Sigmoid colon (tissue), 7 donors: ENCODE measurements at regions of chr20 and their contacts with region 1.

Region 1: GRCh38 chr20:47620808-47621805 is 119.4 kb downstream of the NCOA3 start:
- DNase-seq: no peak
- H3K4me3 ChIP-seq: no peak overlapping the region
- H3K27ac ChIP-seq: no peak overlapping the region
- H3K4me1 ChIP-seq: peaks cover 0 to 4% (median 0%) of the 10 kb centered on the region in 4 donors
- H3K27me3 ChIP-seq: no peaks in the 10 kb centered on the region
- CTCF ChIP-seq: peak; percentile 64 to 85 (median 66)
- EP300 ChIP-seq: no peak
- POLR2A ChIP-seq: no peak

Region 2: GRCh38 chr20:46757754-46758678 is 863.1 kb before region 1 on chr20:
- intact Hi-C with region 1: loop called (anchors 10 kb)
- DNase-seq: no peak
- H3K4me3 ChIP-seq: no peak overlapping the region
- H3K27ac ChIP-seq: no peak overlapping the region
- H3K4me1 ChIP-seq: peaks cover 0 to 4% (median 0%) of the 10 kb centered on the region in 4 donors
- H3K27me3 ChIP-seq: no peaks in the 10 kb centered on the region
- CTCF ChIP-seq: peak; percentile 38 to 95 (median 88)
- EP300 ChIP-seq: no peak
- POLR2A ChIP-seq: no peak

Region 3: GRCh38 chr20:47196091-47197081 is 424.7 kb before region 1 on chr20:
- intact Hi-C with region 1: loop called (anchors 1 kb)
- DNase-seq: peak; percentile 78
- H3K4me3 ChIP-seq: no peak overlapping the region
- H3K27ac ChIP-seq: no peak overlapping the region
- H3K4me1 ChIP-seq: peaks cover 0 to 6% (median 2%) of the 10 kb centered on the region in 4 donors
- H3K27me3 ChIP-seq: no peaks in the 10 kb centered on the region
- CTCF ChIP-seq: peak; percentile 72 to 96 (median 88)
- EP300 ChIP-seq: no peak
- POLR2A ChIP-seq: no peak

Region 4: GRCh38 chr20:47389867-47390347 is 231.2 kb before region 1 on chr20:
- intact Hi-C with region 1: loop called (anchors 2 kb)
- DNase-seq: no peak
- H3K4me3 ChIP-seq: no peak overlapping the region
- H3K27ac ChIP-seq: no peak overlapping the region
- H3K4me1 ChIP-seq: peaks cover 0 to under 1% (median under 1%) of the 10 kb centered on the region in 4 donors
- H3K27me3 ChIP-seq: no peaks in the 10 kb centered on the region
- CTCF ChIP-seq: no peak
- EP300 ChIP-seq: no peak
- POLR2A ChIP-seq: no peak

Region 5: DNA sequence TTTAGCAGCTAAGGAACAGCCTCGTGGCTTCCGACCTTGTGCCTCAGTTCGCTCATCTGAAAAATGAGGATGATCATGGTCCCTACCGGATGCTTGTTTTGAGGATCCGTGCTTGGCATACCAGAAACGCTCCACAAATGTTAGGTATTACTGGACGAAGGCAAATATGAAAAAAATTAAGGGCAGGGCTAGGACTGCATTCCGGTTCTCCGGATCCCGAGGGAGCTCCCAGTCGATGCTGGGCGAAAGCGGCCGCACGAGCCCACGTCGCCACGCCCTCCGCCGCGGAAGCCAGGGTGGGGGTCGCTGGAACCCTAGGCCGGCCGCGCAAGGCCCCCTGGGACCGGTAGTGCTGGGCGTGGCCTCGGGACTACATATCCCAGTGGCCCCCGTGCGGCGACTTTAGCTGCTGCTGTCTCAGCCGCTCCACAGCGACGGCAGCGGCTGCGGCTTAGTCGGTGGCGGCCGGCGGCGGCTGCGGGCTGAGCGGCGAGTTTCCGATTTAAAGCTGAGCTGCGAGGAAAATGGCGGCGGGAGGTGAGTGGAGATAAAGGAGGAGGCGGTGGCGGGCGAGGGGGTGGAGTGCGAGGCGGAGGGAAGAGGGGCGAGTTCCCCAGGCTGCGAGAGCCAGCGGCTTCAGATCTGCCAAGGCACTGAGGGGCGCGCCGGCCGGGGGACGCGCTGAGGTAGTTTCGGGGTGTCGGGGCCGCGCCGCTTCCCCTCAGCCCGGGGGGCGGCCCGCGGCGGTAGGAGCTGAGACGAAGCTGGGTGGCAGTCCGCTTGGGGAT is 119.4 kb before region 1 on chr20 and contains the start of gene NCOA3:
- intact Hi-C with region 1: loop called (anchors 5 kb)
- DNase-seq: peak; percentile 95
- H3K4me3 ChIP-seq: peak within 1 kb of the TSS; percentile 69 to 94 (median 91)
- H3K27ac ChIP-seq: peak within 1 kb of the TSS; percentile 91 to 96 (median 94)
- H3K4me1 ChIP-seq: peaks cover 0 to 24% (median 17%) of the 10 kb centered on the region in 4 donors
- H3K27me3 ChIP-seq: no peaks in the 10 kb centered on the region
- CTCF ChIP-seq: peak; percentile 42 to 81 (median 70)
- EP300 ChIP-seq: no peak
- POLR2A ChIP-seq: peak; percentile 93 to 96
- total RNA-seq, gene NCOA3: 22.8 to 51.0 (median 26.4) TPM